K562 (cell line): ENCODE measurements at regions of chr1 and their contacts with region 1.

Region 1: DNA sequence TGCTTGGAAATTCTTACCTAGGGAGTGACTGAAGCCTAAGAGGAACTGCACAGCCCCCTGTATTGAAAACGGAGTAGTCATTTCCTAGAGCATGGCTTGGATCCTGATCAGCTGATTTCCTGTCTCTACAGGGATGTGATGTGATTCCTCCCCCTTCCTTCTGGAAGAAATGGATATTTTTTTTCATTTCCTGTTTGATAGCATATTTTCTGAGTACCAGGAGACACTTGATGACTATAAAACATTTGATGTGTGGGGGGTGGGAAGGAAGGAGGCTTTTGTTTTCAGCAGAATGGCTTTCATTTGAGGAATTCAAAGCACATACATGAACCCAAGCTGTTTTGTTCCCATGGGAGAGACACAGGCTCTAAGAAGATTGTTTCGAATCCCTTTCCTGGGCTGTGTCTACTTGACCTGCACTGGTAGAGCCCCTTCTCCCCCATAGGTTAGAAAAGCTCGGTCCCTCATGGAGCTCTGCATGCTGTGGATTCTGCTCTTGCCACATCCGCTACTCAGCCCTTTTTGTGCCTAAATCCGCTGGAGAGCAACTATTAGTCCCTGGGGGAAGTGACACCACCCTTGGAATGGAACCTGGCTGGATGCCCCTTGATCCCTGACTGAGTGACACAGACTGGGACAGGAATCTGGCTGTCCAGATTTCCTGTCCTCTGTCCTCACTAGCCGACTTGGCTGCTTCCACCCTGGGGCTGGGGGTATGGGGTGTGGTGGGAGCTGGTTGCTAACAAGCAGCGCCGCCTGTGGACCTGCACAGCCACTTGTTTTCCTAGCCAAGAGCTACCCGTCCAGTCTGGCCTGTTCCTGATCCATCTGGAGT is 71.8 kb upstream of the MACF1 start:
- DNase-seq: peak in 2 of 4 experiments; percentile 29 to 48
- ATAC-seq: peak; percentile 83
- H3K4me3 ChIP-seq: no peak overlapping the region
- H3K27ac ChIP-seq: no peak overlapping the region
- H3K4me1 ChIP-seq: peaks cover 0 to 13% of the 10 kb centered on the region in 2 experiments; a peak in 3 of 5 replicates
- H3K27me3 ChIP-seq: no peaks in the 10 kb centered on the region
- CTCF ChIP-seq: peak; percentile 18 to 33 (median 32); a peak in 2 of 6 replicates
- EP300 ChIP-seq: no peak
- POLR2A ChIP-seq: no peak
- RAD21 ChIP-seq: peak in 1 of 2 experiments; percentile 29; a peak in 1 of 4 replicates

Region 2: DNA sequence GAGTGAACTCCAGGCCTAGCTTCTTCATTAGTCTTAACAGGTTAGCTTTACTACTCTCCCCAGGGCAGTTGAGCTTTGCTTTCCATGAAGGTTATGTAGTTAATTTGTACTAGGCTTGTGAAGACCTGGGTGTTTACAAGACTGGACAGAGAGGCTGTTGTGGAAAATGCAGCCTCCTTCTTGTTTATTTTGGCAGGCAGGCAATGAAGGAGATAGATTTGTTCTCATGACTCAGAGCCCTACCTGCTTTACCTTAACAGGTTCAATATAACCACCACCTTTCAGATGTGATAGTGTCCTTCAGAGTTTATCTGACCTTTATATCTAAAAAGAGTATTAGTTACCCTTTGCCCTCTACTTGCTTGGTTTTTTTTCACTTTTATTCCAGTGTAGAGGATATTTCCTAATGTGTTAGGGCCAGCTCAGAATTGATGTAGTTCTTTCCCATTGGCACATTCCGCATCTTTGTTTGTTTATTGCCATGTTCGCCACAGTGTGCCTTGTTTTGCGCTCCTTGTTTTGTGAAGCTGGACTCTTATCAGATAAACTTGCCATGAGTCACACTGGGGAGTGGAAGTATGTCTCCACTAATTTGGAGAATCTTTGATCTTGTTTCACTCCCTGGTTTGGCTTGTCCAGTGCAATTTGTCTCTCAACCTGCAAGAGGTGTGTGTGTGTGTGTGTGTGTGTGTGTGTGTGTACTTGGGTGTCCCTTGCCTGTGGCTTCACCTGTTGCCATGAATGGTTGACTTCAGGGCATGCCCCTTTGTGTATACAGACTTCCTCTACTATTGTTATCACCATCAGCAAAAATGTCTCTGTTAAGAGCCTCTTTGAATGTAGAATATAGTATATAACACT is 15.6 kb before region 1 on chr1:
- CTCF ChIA-PET with region 1: no interaction called
- POLR2A ChIA-PET with region 1: interaction called, 10 read pairs
- in situ Hi-C with region 1: no loop called
- intact Hi-C with region 1: no loop called
- DNase-seq: peak; percentile 48 to 73 (median 62)
- ATAC-seq: peak; percentile 81
- H3K4me3 ChIP-seq: no peak overlapping the region
- H3K27ac ChIP-seq: no peak overlapping the region; the same call in 2 of the 3 replicates
- H3K4me1 ChIP-seq: peaks cover 26 to 42% of the 10 kb centered on the region in 2 experiments
- H3K27me3 ChIP-seq: no peaks in the 10 kb centered on the region
- CTCF ChIP-seq: no peak
- EP300 ChIP-seq: 0 out of 2 replicates have a peak, but pooled peaks have one; percentile 30
- POLR2A ChIP-seq: no peak
- RAD21 ChIP-seq: no peak

Region 3: GRCh38 chr1:39183503-39184353 is 51.0 kb after region 1 on chr1:
- CTCF ChIA-PET with region 1: interaction called, 5 read pairs
- POLR2A ChIA-PET with region 1: interaction called, 5 read pairs
- in situ Hi-C with region 1: no loop called
- intact Hi-C with region 1: loop called (anchors 1 kb)
- DNase-seq: peak; percentile 50 to 85 (median 60)
- ATAC-seq: peak; percentile 88
- H3K4me3 ChIP-seq: no peak overlapping the region
- H3K27ac ChIP-seq: peak overlapping the region; percentile 61; the same call in 2 of the 3 replicates
- H3K4me1 ChIP-seq: peaks cover 17 to 30% of the 10 kb centered on the region in 2 experiments
- H3K27me3 ChIP-seq: no peaks in the 10 kb centered on the region
- CTCF ChIP-seq: peak; percentile 69 to 79 (median 73)
- EP300 ChIP-seq: peak; percentile 55; the same call in 1 of the 2 replicates
- POLR2A ChIP-seq: no peak
- RAD21 ChIP-seq: peak; percentile 52 to 68

Region 4: DNA sequence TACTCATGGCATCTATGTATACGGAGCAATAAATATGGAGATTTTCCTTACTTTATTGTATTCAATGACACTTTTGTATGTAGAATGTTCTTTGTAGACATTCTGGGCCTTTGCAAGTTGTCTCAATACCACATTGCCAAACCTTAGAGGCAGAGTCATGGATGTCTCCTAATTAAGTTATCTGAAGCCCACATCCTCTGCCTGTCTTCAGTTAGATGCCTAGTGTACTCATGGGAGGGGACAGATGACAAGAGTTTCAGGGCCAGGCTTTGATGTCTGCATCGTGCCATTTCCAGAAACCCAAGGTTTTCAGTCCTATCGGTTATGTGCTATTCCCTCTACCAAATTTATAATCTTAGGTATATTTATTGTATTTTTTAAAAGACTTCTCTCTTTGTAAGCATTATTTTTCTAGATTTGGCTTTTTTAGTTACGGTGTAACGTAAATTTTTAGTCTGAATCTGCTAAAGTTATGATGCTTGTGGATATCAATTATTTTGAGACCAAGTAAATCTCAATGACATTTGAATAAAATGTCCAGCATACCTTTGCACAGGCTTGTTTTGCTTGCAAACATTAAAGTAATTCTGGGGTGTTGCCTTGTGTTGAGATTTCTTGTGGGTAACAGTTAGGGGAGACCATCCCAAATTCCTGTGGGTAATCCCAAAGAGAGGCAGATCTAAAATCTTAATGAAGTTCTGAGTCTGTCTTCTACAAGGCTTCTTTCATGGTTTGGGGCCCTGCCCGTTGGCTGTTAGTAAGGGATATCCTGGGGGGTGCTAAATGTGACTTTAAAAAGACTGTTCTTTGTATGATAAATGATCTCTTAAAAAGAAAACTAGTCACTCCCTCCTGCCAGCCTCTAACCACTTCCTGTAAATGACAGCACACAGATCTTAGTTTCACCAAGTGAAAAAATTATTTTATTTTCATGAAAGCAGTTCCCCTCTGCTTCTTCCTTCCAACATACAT is 63.8 kb after region 1 on chr1:
- CTCF ChIA-PET with region 1: interaction called, 10 read pairs
- POLR2A ChIA-PET with region 1: interaction called, 3 read pairs
- in situ Hi-C with region 1: no loop called
- intact Hi-C with region 1: loop called (anchors 1 kb)
- DNase-seq: peak; percentile 41 to 84 (median 62)
- ATAC-seq: peak; percentile 75
- H3K4me3 ChIP-seq: no peak overlapping the region
- H3K27ac ChIP-seq: peak overlapping the region; percentile 72
- H3K4me1 ChIP-seq: peaks cover 22 to 40% of the 10 kb centered on the region in 2 experiments
- H3K27me3 ChIP-seq: no peaks in the 10 kb centered on the region
- CTCF ChIP-seq: no peak
- EP300 ChIP-seq: peak; percentile 81; the same call in 1 of the 2 replicates
- POLR2A ChIP-seq: no peak
- RAD21 ChIP-seq: 0 out of 4 replicates have a peak, but pooled peaks have one; percentile 6 to 28

Region 5: DNA sequence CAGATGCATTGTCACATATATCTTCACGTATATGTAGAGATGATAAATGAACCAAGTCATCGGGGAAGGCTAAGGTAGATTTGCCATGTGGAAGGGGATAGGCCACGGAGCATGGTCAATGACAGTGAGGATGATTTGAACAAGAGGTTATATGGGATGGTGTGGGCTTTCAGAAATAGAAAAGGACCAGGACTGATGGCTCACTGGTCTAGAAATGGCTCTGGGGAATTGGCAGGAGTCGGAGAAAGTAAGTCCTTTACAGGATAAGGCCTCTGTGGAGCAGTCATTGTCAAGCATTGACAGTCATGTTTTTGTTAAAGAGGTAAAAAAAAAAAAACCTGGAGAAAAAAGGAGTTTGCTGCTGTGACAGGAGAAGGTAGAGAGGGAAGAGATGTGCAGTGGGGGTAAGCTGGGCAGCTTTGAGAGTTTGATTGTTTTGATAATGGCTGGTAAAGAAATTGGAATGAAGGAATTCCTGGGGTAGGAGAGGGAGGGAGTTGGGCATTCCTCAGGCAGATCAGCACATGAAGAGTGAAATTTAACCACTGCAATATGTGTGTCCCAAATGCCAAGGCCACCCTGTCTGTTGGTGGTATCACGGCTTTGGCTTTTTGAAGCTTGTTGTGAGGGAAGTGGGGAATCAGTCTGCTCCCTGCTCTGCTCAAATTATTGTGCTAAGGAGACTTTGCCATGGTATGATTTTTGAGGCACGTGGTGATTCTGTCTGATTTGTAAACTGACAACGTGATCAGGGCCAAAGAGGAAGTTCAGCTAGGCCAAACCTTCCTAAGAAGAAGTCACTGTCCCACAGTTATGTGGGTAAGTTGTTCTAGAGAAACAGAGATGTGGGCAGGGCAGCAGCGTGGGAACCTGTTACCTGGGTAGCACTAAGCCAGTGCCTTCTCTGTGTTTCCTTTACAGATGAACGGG is 97.8 kb after region 1 on chr1:
- CTCF ChIA-PET with region 1: no interaction called
- POLR2A ChIA-PET with region 1: no interaction called
- in situ Hi-C with region 1: no loop called
- intact Hi-C with region 1: no loop called
- DNase-seq: no peak
- ATAC-seq: peak; percentile 61
- H3K4me3 ChIP-seq: no peak overlapping the region
- H3K27ac ChIP-seq: peak overlapping the region; percentile 12; the same call in 1 of the 3 replicates
- H3K4me1 ChIP-seq: peaks cover 0 to 15% of the 10 kb centered on the region in 2 experiments; a peak in 3 of 5 replicates
- H3K27me3 ChIP-seq: no peaks in the 10 kb centered on the region
- CTCF ChIP-seq: no peak
- EP300 ChIP-seq: no peak
- POLR2A ChIP-seq: no peak
- RAD21 ChIP-seq: no peak

Region 6: GRCh38 chr1:39258146-39258924 is 125.6 kb after region 1 on chr1:
- CTCF ChIA-PET with region 1: interaction called, 17 read pairs
- POLR2A ChIA-PET with region 1: no interaction called
- in situ Hi-C with region 1: no loop called
- intact Hi-C with region 1: loop called (anchors 1 kb)
- DNase-seq: peak; percentile 78 to 85 (median 82)
- ATAC-seq: peak; percentile 92
- H3K4me3 ChIP-seq: no peak overlapping the region
- H3K27ac ChIP-seq: no peak overlapping the region
- H3K4me1 ChIP-seq: no peaks in the 10 kb centered on the region
- H3K27me3 ChIP-seq: no peaks in the 10 kb centered on the region
- CTCF ChIP-seq: peak; percentile 89 to 97 (median 95)
- EP300 ChIP-seq: no peak
- POLR2A ChIP-seq: no peak
- RAD21 ChIP-seq: peak; percentile 97 to 99

Region 7: DNA sequence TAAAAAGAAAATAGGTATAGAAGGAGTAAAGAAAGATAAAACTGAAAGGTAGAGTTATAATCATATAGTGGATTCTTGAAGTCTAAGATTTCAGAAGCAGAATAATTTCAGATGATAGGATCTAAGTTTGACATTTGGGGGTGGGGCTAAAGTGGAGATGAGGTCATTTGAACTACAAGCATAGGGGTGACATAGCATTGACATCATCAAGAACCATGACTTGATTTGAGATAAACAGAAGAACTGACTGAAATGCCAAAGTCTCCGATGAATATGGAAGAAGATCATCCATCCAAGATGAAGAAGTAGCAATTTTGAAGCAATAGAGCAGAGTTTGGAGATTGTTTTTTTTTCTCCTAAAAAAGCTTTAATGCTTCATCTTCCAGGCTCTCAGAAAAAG is 194.1 kb after region 1 on chr1:
- CTCF ChIA-PET with region 1: no interaction called
- POLR2A ChIA-PET with region 1: no interaction called
- in situ Hi-C with region 1: no loop called
- intact Hi-C with region 1: no loop called
- DNase-seq: peak in 3 of 4 experiments; percentile 21 to 32 (median 31)
- ATAC-seq: no peak
- H3K4me3 ChIP-seq: no peak overlapping the region
- H3K27ac ChIP-seq: no peak overlapping the region
- H3K4me1 ChIP-seq: no peaks in the 10 kb centered on the region
- H3K27me3 ChIP-seq: no peaks in the 10 kb centered on the region
- CTCF ChIP-seq: no peak
- EP300 ChIP-seq: no peak
- POLR2A ChIP-seq: no peak
- RAD21 ChIP-seq: no peak

Region 8: GRCh38 chr1:39509360-39510009 is 376.8 kb after region 1 on chr1:
- CTCF ChIA-PET with region 1: no interaction called
- POLR2A ChIA-PET with region 1: no interaction called
- in situ Hi-C with region 1: no loop called
- intact Hi-C with region 1: no loop called
- DNase-seq: no peak
- ATAC-seq: 0 out of 3 replicates have a peak, but pooled peaks have one; percentile 5
- H3K4me3 ChIP-seq: no peak overlapping the region
- H3K27ac ChIP-seq: no peak overlapping the region
- H3K4me1 ChIP-seq: peaks cover 6 to 8% of the 10 kb centered on the region in 2 experiments; a peak in 2 of 5 replicates
- H3K27me3 ChIP-seq: no peaks in the 10 kb centered on the region
- CTCF ChIP-seq: no peak
- EP300 ChIP-seq: no peak
- POLR2A ChIP-seq: no peak
- RAD21 ChIP-seq: no peak